ENCODE measurements at regions of chr3 and their contacts with region 1.

Region 1: DNA sequence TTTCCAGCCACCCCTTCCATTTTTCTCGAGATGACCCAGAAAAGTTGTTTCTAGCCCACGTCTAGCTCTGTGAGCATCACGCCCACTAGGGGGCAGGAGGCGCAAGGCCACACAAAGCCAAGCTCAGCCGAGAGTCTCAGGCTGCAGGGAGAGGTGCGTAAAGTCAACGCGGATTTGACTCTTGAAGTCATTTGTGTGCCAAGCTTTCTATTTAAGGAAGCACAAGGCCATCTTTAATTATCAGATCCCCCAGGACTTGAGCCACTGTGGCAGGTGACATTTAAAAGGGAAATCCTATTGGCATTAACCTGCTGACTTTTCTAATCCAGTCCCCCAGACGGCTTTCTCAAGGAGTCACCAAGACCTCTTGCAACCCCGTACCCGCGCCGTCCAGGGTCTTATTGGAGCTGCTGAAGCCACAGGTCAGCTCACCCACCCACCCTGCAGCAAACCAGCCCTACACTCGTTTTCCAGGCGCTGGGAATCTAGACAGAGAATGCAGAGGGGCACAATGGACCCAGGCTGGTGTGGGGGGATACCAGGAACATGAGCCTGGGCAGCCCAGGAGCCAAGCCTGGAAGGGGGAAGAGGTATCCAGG is 62.1 kb downstream of the CAPN7 start:
- DNase-seq: peak; percentile 91
- ATAC-seq: peak; percentile 66
- H3K4me3 Mint-ChIP-seq: no peak overlapping the region
- H3K27ac Mint-ChIP-seq: peak overlapping the region; percentile 21
- H3K4me1 Mint-ChIP-seq: peaks cover 66% of the 10 kb centered on the region
- H3K27me3 Mint-ChIP-seq: no peaks in the 10 kb centered on the region

Region 2: GRCh38 chr3:15291589-15292541 is 23.7 kb after region 1 on chr3:
- CTCF ChIA-PET with region 1: interaction called, 58 read pairs
- DNase-seq: peak; percentile 90
- ATAC-seq: peak; percentile 91
- H3K4me3 Mint-ChIP-seq: peak overlapping the region; percentile 58
- H3K27ac Mint-ChIP-seq: peak overlapping the region; percentile 92
- H3K4me1 Mint-ChIP-seq: peaks cover 73% of the 10 kb centered on the region
- H3K27me3 Mint-ChIP-seq: no peaks in the 10 kb centered on the region

Region 3: DNA sequence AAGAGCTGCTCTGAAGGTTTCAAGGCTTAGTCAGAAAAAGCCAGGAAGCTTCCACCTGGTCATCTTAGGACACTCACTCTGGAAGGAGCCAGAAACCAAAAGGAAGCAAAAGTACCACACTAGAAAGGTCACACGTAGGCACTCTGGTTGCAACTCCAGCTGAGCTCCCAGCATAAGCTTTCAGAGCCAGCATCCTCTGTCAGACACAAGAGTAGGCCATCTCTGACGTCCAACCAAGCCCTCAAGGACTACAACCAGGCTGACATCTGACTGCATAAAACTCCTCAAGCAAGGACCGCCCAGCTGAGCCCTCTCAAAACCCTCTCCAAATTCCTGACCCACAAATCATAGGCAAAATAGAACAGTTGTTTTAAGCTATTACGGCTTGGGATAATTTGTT is 51.4 kb after region 1 on chr3:
- CTCF ChIA-PET with region 1: interaction called, 14 read pairs
- DNase-seq: no peak
- ATAC-seq: no peak
- H3K4me3 Mint-ChIP-seq: no peak overlapping the region
- H3K27ac Mint-ChIP-seq: no peak overlapping the region
- H3K4me1 Mint-ChIP-seq: peaks cover 35% of the 10 kb centered on the region
- H3K27me3 Mint-ChIP-seq: no peaks in the 10 kb centered on the region

Region 4: GRCh38 chr3:15356186-15356585 is 88.1 kb after region 1 on chr3:
- CTCF ChIA-PET with region 1: interaction called, 30 read pairs
- DNase-seq: no peak
- ATAC-seq: no peak
- H3K4me3 Mint-ChIP-seq: peak overlapping the region; percentile 23
- H3K27ac Mint-ChIP-seq: peak overlapping the region; percentile 82
- H3K4me1 Mint-ChIP-seq: peaks cover 46% of the 10 kb centered on the region
- H3K27me3 Mint-ChIP-seq: no peaks in the 10 kb centered on the region

Region 5: DNA sequence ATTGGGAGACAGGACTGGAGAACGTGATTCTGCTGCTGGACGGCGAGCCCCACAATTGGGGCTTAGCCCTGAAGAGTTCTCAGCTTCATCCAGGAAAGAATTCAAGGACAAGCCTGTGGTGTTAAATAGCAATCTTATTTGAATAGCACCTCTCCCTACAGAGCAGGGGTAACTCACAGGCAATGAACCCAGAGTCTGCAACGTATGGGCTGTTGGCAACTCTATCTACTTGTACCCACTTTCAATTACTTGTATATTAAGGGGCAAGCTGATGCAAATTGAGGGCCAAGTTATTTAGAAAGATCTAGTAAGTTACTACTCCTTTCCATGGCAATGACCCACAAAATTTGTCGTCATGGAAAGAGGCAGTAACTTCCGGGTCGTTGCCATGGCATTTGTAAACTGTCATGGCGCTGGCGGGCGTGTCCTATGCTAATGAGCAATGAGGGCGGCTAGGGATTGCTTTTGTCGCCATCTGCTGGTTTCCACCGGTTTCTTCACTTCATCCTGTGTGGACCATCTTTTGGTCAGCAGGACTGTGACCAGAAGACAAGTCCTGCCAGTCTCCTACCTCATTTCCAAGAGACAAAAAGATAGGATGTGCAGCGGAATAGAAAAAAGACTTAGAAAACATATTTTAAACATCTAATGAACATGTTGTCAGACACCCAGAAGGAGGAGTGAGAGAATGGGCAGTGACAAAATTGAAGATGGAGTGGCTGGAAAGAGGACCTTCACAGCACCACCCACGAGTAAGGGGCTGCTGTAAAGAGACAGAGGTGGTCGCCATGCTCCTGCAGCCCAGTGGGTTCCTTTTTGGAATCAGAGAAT is 110.0 kb after region 1 on chr3:
- CTCF ChIA-PET with region 1: interaction called, 145 read pairs
- DNase-seq: peak; percentile 98
- ATAC-seq: peak; percentile 95
- H3K4me3 Mint-ChIP-seq: no peak overlapping the region
- H3K27ac Mint-ChIP-seq: peak overlapping the region; percentile 82
- H3K4me1 Mint-ChIP-seq: peaks cover 6% of the 10 kb centered on the region
- H3K27me3 Mint-ChIP-seq: no peaks in the 10 kb centered on the region

Region 6: GRCh38 chr3:15405448-15406050 is 137.4 kb after region 1 on chr3:
- CTCF ChIA-PET with region 1: interaction called, 96 read pairs
- DNase-seq: no peak
- ATAC-seq: peak; percentile 64
- H3K4me3 Mint-ChIP-seq: no peak overlapping the region
- H3K27ac Mint-ChIP-seq: no peak overlapping the region
- H3K4me1 Mint-ChIP-seq: peaks cover 12% of the 10 kb centered on the region
- H3K27me3 Mint-ChIP-seq: no peaks in the 10 kb centered on the region

Measured in activated CD8-positive, alpha-beta memory T cell treated with anti-CD3 and anti-CD28 coated beads, Interleukin-2, amount 10 ng/mL, durations not matched to agents 7 days and 5 days (primary cell).